ENCODE measurements at regions of chr16 and their contacts with region 1.

Region 1: GRCh38 chr16:15427648-15428239 is 6.6 kb upstream of the BMERB1 start:
- DNase-seq: no peak
- ATAC-seq: peak; percentile 89
- H3K4me3 ChIP-seq: no peak overlapping the region
- H3K27ac ChIP-seq: no peak overlapping the region
- H3K4me1 ChIP-seq: no peaks in the 10 kb centered on the region
- H3K27me3 ChIP-seq: no peaks in the 10 kb centered on the region
- CTCF ChIP-seq: peak; percentile 88

Region 2: DNA sequence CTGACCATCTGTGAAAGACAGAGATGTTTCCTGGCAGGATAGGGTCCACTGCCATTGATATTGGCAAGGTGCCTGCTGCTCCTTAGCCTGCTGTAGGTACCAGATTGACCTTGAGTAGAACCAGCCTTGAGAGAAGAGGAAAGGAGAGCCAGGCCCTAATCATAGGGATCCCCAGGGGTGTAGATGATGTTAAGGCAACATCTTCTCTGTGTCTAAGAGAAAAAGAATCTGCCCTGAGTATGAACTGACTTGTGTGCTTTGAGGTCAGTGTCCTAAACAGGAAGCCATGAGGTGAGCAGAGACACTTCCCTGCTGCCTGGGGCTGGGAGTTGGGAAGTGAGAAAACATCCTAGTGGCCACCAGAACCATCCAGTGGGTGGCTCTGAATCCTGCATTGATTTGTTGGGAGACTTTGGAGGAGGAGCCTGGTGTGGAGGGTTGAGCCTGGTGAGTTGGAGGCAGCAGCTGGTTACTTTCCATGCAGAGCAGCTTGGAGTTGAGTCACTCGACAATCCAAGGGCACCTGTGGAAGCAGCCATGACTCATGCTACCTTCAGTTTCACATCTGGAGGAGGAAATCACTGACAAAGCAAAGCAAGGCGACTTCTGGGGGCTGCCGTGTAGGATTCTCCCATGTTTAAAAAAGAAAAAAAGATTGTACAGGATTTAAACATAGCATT is 54.5 kb after region 1 on chr16:
- CTCF ChIA-PET with region 1: no interaction called
- POLR2A ChIA-PET with region 1: no interaction called
- in situ Hi-C with region 1: no loop called
- intact Hi-C with region 1: loop called (anchors 10 kb)
- DNase-seq: peak; percentile 98
- ATAC-seq: peak; percentile 99
- H3K4me3 ChIP-seq: 0 out of 4 replicates have a peak overlapping the region, but pooled peaks of 1 of the 2 experiments have one; percentile 2
- H3K27ac ChIP-seq: peak overlapping the region; percentile 48
- H3K4me1 ChIP-seq: peaks cover 12% of the 10 kb centered on the region; the same call in 1 of the 2 replicates
- H3K27me3 ChIP-seq: no peaks in the 10 kb centered on the region
- CTCF ChIP-seq: no peak

Region 3: DNA sequence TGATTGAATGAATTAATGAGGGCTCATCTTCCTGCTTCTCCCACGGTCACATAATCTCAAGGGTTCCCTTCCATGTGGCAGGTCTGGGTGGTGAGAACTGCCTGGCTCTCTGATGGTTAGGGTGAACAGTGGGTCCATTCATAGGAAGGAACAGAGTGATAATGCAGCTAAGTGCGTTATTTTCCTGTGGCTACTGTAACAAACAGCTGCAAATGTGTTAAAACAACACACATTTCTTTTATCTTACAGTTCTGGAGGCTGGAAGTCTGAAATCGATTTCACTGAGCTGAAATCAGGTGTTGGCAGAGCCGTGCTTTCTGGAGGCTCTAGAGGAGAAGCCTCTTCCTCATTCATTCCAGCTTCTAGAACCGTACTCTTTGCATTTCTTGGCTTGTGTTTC is 101.9 kb after region 1 on chr16:
- CTCF ChIA-PET with region 1: no interaction called
- POLR2A ChIA-PET with region 1: no interaction called
- in situ Hi-C with region 1: no loop called
- intact Hi-C with region 1: no loop called
- DNase-seq: no peak
- ATAC-seq: no peak
- H3K4me3 ChIP-seq: no peak overlapping the region
- H3K27ac ChIP-seq: no peak overlapping the region
- H3K4me1 ChIP-seq: no peaks in the 10 kb centered on the region
- H3K27me3 ChIP-seq: no peaks in the 10 kb centered on the region
- CTCF ChIP-seq: no peak

Measured in Panc1 (cell line).